ENCODE measurements at regions of chr2 and their contacts with region 1.

Region 1: GRCh38 chr2:27489498-27490397 is at the start of gene IFT172:
- DNase-seq: peak; percentile 92
- ATAC-seq: peak; percentile 96
- H3K4me3 Mint-ChIP-seq: peak within 1 kb of the TSS; percentile 86
- H3K27ac Mint-ChIP-seq: peak within 1 kb of the TSS; percentile 79
- H3K4me1 Mint-ChIP-seq: peaks cover 26% of the 10 kb centered on the region
- H3K27me3 Mint-ChIP-seq: peaks cover 19% of the 10 kb centered on the region
- CTCF ChIP-seq: no peak
- total RNA-seq, gene IFT172: 12.7 and 14.4 TPM in 2 replicates

Region 2: GRCh38 chr2:27050281-27050995 is 439.3 kb before region 1 on chr2:
- CTCF ChIA-PET with region 1: no interaction called
- POLR2A ChIA-PET with region 1: no interaction called
- intact Hi-C with region 1: loop called (anchors 1 kb)
- DNase-seq: peak; percentile 91
- ATAC-seq: peak; percentile 60
- H3K4me3 Mint-ChIP-seq: peak overlapping the region; percentile 97
- H3K27ac Mint-ChIP-seq: peak overlapping the region; percentile 100
- H3K4me1 Mint-ChIP-seq: peaks cover 19% of the 10 kb centered on the region
- H3K27me3 Mint-ChIP-seq: peaks cover 6% of the 10 kb centered on the region
- CTCF ChIP-seq: no peak

Region 3: GRCh38 chr2:27428213-27428977 is 61.4 kb before region 1 on chr2 and contains the start of gene NRBP1:
- CTCF ChIA-PET with region 1: no interaction called
- POLR2A ChIA-PET with region 1: no interaction called
- intact Hi-C with region 1: loop called (anchors 1 kb)
- DNase-seq: peak; percentile 95
- ATAC-seq: peak; percentile 90
- H3K4me3 Mint-ChIP-seq: peak within 1 kb of the TSS; percentile 98
- H3K27ac Mint-ChIP-seq: peak within 1 kb of the TSS; percentile 98
- H3K4me1 Mint-ChIP-seq: peaks cover 50% of the 10 kb centered on the region
- H3K27me3 Mint-ChIP-seq: no peaks in the 10 kb centered on the region
- CTCF ChIP-seq: no peak
- total RNA-seq, gene NRBP1: 78.9 and 82.3 TPM in 2 replicates

Region 4: GRCh38 chr2:27582695-27583389 is 93.1 kb after region 1 on chr2 and contains the start of gene ZNF512:
- CTCF ChIA-PET with region 1: no interaction called
- POLR2A ChIA-PET with region 1: no interaction called
- intact Hi-C with region 1: loop called (anchors 1 kb)
- DNase-seq: peak; percentile 81
- ATAC-seq: peak; percentile 95
- H3K4me3 Mint-ChIP-seq: peak within 1 kb of the TSS; percentile 97
- H3K27ac Mint-ChIP-seq: peak within 1 kb of the TSS; percentile 90
- H3K4me1 Mint-ChIP-seq: peaks cover 48% of the 10 kb centered on the region
- H3K27me3 Mint-ChIP-seq: peaks cover 4% of the 10 kb centered on the region
- CTCF ChIP-seq: no peak
- total RNA-seq, gene ZNF512: 45.4 and 48.7 TPM in 2 replicates

Region 5: DNA sequence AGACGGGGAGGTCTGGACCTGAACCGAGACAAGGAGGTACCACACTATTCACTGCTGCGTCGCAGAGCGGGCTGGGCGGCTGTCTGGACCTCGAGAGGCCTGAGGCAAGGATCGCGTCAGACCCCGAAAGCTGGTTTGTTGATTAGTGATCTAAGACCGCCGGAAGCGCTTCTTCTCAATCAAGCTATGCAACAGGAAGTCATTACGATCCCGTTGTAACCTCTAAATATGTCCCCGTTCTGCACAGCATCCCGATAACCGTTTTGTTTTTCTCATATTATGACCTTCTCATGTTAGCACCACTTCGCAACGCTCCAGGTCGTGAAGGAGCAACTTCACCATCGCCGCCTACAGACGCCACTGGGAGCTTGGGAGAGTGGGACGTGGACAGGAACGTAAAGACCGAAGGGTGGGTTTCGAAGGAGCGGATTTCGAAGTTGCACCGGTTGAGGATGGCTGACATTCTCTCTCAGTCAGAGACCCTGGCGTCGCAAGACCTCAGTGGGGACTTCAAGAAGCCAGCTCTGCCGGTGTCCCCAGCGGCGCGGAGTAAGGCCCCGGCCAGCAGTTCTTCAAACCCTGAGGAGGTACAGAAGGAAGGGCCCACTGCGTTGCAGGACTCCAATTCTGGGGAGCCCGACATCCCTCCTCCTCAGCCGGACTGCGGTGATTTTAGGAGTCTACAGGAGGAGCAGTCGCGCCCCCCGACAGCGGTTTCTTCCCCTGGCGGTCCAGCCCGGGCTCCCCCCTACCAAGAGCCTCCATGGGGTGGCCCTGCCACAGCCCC is 173.9 kb after region 1 on chr2 and contains the starts of genes SLC4A1AP and SUPT7L:
- CTCF ChIA-PET with region 1: no interaction called
- POLR2A ChIA-PET with region 1: no interaction called
- intact Hi-C with region 1: loop called (anchors 1 kb)
- DNase-seq: peak; percentile 72
- ATAC-seq: peak; percentile 81
- H3K4me3 Mint-ChIP-seq: peak within 1 kb of the TSS; percentile 100
- H3K27ac Mint-ChIP-seq: peak within 1 kb of the TSS; percentile 99
- H3K4me1 Mint-ChIP-seq: peaks cover 46% of the 10 kb centered on the region
- H3K27me3 Mint-ChIP-seq: no peaks in the 10 kb centered on the region
- CTCF ChIP-seq: no peak
- total RNA-seq, gene SLC4A1AP: 21.4 and 22.0 TPM in 2 replicates
- total RNA-seq, gene SUPT7L: 28.1 and 30.9 TPM in 2 replicates

Region 6: GRCh38 chr2:28751252-28751955 is 1261.7 kb after region 1 on chr2 and contains the start of gene PPP1CB:
- CTCF ChIA-PET with region 1: no interaction called
- POLR2A ChIA-PET with region 1: no interaction called
- intact Hi-C with region 1: loop called (anchors 2 kb)
- DNase-seq: peak; percentile 96
- ATAC-seq: peak; percentile 86
- H3K4me3 Mint-ChIP-seq: peak within 1 kb of the TSS; percentile 95
- H3K27ac Mint-ChIP-seq: peak within 1 kb of the TSS; percentile 98
- H3K4me1 Mint-ChIP-seq: peaks cover 54% of the 10 kb centered on the region
- H3K27me3 Mint-ChIP-seq: no peaks in the 10 kb centered on the region
- CTCF ChIP-seq: no peak
- total RNA-seq, gene PPP1CB: 130 and 135 TPM in 2 replicates

Measured in activated B cell treated with CpG ODN at 0.5 μM for 24 hours (primary cell).